HCT116 (cell line): ENCODE measurements at regions of chr14 and their contacts with region 1.

Region 1: GRCh38 chr14:74860906-74861733 is 14.8 kb downstream of the PROX2 start:
- DNase-seq: peak; percentile 69
- ATAC-seq: peak; percentile 95
- H3K4me3 ChIP-seq: no peak overlapping the region
- H3K27ac ChIP-seq: no peak overlapping the region
- H3K4me1 ChIP-seq: peaks cover 0 to 4% of the 10 kb centered on the region in 2 experiments; a peak in 1 of 4 replicates
- H3K27me3 ChIP-seq: no peaks in the 10 kb centered on the region
- CTCF ChIP-seq: peak; percentile 78 to 92 (median 89)
- POLR2A ChIP-seq: no peak
- RAD21 ChIP-seq: peak; percentile 90

Region 2: DNA sequence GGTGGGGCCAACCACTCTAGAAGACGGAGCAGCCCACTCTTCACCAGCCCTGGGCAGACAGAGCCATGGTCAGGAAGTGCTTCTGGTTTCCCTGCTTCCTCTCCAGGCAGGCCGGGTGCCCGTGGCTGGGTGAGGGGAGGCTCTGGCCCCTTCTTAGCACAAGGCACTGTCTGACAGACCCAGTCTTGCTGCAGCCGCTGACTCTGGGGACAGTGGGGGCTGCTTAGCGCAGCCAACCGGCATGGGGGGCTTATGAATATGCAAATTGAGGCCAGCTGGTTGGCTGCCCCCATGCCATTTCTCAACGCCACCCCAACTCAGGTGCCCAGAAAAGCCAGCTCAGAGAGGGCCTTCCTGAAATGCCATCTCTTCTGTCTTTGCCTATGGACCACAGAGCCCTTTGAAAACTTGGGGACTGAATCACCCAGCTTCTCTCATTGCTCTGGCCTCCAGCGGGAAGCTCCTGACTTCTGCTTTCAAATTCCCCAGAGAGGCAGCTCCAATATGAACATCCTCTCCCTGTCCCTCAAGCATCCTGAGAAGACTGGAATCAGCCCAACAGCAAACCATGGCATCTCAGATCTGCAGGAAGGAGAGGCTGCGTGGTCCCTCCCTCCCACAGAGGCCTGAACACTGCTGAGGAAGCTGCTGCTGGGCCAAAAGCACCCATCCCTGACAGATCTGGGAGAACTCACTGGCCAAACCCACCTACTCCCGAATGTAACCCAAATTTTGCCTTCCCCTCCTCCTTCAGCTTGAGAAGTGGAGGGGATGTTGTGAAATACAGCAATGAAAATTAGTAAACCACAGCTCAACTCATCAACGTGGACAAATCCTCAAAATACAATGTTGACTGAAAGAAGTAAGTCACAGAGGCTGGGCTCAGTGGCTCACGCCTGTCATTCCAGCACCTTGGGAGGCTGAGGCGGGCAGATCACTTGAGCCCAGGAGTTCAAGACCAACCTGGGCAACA is 15.1 kb after region 1 on chr14 and contains the start of gene PROX2:
- CTCF ChIA-PET with region 1: interaction called, 54 read pairs
- POLR2A ChIA-PET with region 1: no interaction called
- RAD21 ChIA-PET with region 1: no interaction called
- intact Hi-C with region 1: no loop called
- DNase-seq: no peak
- ATAC-seq: no peak
- H3K4me3 ChIP-seq: no peak within 1 kb of the TSS
- H3K27ac ChIP-seq: no peak within 1 kb of the TSS
- H3K4me1 ChIP-seq: peaks cover 5% of the 10 kb centered on the region in 2 experiments
- H3K27me3 ChIP-seq: no peaks in the 10 kb centered on the region
- CTCF ChIP-seq: no peak
- POLR2A ChIP-seq: no peak
- RAD21 ChIP-seq: no peak
- total RNA-seq, gene PROX2: not detected

Region 3: DNA sequence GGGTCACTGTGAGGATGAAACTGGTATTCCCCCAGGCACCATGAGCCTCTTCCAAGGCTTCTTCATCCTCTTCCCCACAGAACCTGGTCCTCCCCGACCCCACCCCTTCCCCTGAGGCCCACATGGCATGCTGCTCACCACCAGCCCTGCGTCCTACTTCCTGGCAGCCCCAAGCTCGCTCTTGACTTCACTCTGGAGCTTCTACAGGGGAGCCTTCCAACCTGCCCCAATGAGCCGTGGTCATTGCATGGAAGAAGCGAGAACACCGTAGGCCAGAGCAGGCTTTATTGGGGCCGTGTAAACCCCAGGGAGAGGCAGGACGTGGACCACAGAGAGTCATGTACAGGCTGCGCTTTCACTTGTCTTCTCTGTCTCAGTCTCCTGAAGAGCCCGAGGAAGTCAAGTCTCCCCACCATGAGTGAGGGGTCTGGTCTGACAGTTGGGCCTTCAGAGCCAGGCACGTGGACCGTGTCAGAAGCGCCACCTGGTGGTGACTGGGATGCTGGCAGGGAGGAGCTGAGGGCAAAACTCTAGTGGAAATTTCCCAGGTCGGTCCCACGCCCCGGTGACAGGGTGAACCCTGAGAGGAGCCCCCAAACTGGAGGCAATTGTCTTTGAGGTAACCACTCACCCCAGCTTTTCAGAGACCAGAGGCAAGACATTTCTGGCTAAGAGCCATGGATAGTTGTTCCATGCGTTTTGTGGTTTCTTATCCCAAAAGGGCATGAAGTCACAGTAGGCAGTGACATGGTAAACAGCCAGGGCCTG is 44.4 kb after region 1 on chr14:
- CTCF ChIA-PET with region 1: interaction called, 94 read pairs
- POLR2A ChIA-PET with region 1: no interaction called
- RAD21 ChIA-PET with region 1: interaction called, 12 to 13 read pairs
- intact Hi-C with region 1: loop called (anchors 1 kb)
- DNase-seq: peak; percentile 28
- ATAC-seq: peak; percentile 68
- H3K4me3 ChIP-seq: no peak overlapping the region
- H3K27ac ChIP-seq: no peak overlapping the region
- H3K4me1 ChIP-seq: peaks cover 3 to 8% of the 10 kb centered on the region in 2 experiments; a peak in 2 of 4 replicates
- H3K27me3 ChIP-seq: no peaks in the 10 kb centered on the region
- CTCF ChIP-seq: peak; percentile 75 to 98 (median 97); a peak in 5 of 6 replicates
- POLR2A ChIP-seq: no peak
- RAD21 ChIP-seq: peak; percentile 71

Region 4: DNA sequence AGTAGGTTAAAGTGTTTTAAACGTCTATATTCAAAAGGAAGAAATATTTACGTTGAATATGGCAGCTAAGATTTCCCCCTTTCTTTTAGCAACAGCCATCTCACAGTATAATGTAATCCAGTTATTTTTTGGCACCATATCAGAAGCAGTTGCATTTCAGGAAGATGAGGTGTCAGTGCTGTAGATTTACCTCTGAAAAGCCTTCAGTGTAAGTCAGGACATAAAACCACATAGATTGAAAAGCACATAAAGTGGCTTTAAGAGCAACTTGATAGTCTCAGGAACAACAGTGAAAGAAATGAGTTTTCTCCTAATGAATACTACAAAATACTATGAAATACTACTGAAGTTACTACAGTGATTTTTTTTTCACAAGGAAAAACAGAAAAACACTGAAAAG is 183.2 kb after region 1 on chr14:
- CTCF ChIA-PET with region 1: no interaction called
- POLR2A ChIA-PET with region 1: no interaction called
- RAD21 ChIA-PET with region 1: no interaction called
- intact Hi-C with region 1: no loop called
- DNase-seq: no peak
- ATAC-seq: no peak
- H3K4me3 ChIP-seq: no peak overlapping the region
- H3K27ac ChIP-seq: no peak overlapping the region
- H3K4me1 ChIP-seq: peaks cover 7 to 16% of the 10 kb centered on the region in 2 experiments; a peak in 3 of 4 replicates
- H3K27me3 ChIP-seq: no peaks in the 10 kb centered on the region
- CTCF ChIP-seq: no peak
- POLR2A ChIP-seq: no peak
- RAD21 ChIP-seq: no peak

Region 5: GRCh38 chr14:75088574-75089373 is 227.7 kb after region 1 on chr14:
- CTCF ChIA-PET with region 1: interaction called, 22 read pairs
- POLR2A ChIA-PET with region 1: no interaction called
- RAD21 ChIA-PET with region 1: interaction called in 1 of 2 experiments, 5 read pairs
- intact Hi-C with region 1: loop called (anchors 1 kb)
- DNase-seq: peak; percentile 26
- ATAC-seq: peak; percentile 77
- H3K4me3 ChIP-seq: no peak overlapping the region
- H3K27ac ChIP-seq: no peak overlapping the region
- H3K4me1 ChIP-seq: no peaks in the 10 kb centered on the region
- H3K27me3 ChIP-seq: no peaks in the 10 kb centered on the region
- CTCF ChIP-seq: peak; percentile 79 to 85 (median 84)
- POLR2A ChIP-seq: no peak
- RAD21 ChIP-seq: peak; percentile 92